CD4-positive, alpha-beta T cell (primary cell): ENCODE measurements at regions of chr11 and their contacts with region 1.

Region 1: GRCh38 chr11:75241036-75241905 is 697 bp downstream of the TPBGL start:
- DNase-seq: peak; percentile 64 to 93 (median 85)
- ATAC-seq: peak; percentile 88
- H3K4me3 ChIP-seq: peak overlapping the region; percentile 30
- H3K4me3 Mint-ChIP-seq: peak overlapping the region; percentile 82
- H3K27ac ChIP-seq: no peak overlapping the region
- H3K27ac Mint-ChIP-seq: no peak overlapping the region
- H3K4me1 ChIP-seq: peaks cover 15% of the 10 kb centered on the region
- H3K4me1 Mint-ChIP-seq: peaks cover 5% of the 10 kb centered on the region
- H3K27me3 ChIP-seq: peaks cover 33% of the 10 kb centered on the region in 2 experiments
- H3K27me3 Mint-ChIP-seq: peaks cover 63% of the 10 kb centered on the region
- CTCF ChIP-seq: peak; percentile 40

Region 2: DNA sequence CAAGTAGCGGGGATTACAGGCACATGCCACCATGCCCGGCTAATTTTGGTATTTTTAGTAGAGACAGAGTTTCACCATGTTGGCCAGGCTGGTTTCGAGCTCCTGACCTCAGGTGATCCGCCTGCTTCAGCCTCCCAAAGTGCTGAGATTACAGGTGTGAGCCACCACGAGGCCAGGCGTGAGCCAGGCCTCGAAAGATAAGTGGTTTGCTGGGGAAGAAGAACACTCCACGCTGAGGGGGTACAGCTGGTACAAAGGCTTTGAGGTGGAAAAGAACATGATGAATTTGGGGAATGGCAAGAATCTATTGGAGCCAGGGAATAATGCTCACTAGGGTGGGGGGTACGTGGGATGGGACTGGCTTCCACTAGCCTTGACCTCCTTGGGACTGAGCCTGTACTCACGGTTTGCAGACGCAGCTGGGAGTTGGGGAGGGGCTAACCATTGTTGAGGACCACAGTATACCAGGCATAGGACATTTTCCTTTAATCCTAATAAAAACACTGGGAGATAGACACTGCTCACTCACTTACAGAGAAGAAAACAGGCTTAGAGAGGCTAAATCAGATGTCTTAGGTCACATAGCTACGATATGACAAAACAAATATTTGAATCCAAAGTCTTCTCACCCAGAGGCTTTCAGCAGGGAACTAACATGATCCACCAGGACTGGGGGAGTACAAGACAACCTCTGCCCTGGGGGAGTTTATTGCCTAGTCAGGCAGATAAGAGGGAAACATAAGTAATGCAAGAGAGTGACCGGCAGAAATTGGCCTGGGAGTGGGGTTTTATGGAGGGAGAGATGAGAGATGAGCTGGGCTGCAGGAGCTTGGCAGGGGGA is 85.5 kb before region 1 on chr11:
- CTCF ChIA-PET with region 1: no interaction called
- POLR2A ChIA-PET with region 1: no interaction called
- intact Hi-C with region 1: no loop called
- DNase-seq: no peak
- ATAC-seq: no peak
- H3K4me3 ChIP-seq: no peak overlapping the region
- H3K4me3 Mint-ChIP-seq: no peak overlapping the region
- H3K27ac ChIP-seq: no peak overlapping the region
- H3K27ac Mint-ChIP-seq: no peak overlapping the region
- H3K4me1 ChIP-seq: no peaks in the 10 kb centered on the region
- H3K4me1 Mint-ChIP-seq: no peaks in the 10 kb centered on the region
- H3K27me3 ChIP-seq: peaks cover 0 to under 1% of the 10 kb centered on the region in 2 experiments
- H3K27me3 Mint-ChIP-seq: peaks cover 8% of the 10 kb centered on the region
- CTCF ChIP-seq: no peak

Region 3: DNA sequence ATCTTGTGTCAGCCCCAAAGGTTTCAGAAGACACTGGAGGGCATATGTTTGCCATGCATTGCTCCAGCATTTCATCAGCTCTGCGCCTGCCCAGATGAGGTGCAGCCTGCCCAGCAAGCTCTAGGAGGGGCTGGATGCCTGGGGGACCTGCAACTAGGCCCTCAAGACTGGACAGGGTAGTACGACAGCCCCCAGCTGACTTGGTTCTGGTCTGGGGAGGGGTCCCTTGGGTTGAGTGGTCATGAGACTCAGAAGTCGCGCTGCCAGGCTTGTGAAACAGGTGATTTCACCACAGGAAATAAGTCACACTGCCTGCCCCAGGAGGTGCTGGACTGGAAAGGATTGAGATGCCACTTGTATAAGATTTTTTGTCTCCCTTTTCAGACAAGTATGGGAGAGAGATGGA is 22.7 kb after region 1 on chr11:
- CTCF ChIA-PET with region 1: interaction called, 3 read pairs
- POLR2A ChIA-PET with region 1: interaction called, 11 read pairs
- intact Hi-C with region 1: no loop called
- DNase-seq: peak in 4 of 14 experiments; percentile 29 to 46 (median 41)
- ATAC-seq: peak; percentile 21
- H3K4me3 ChIP-seq: no peak overlapping the region
- H3K4me3 Mint-ChIP-seq: no peak overlapping the region
- H3K27ac ChIP-seq: peak overlapping the region in 1 of 2 donors; percentile 22
- H3K27ac Mint-ChIP-seq: peak overlapping the region; percentile 67
- H3K4me1 ChIP-seq: peaks cover 56% of the 10 kb centered on the region
- H3K4me1 Mint-ChIP-seq: peaks cover 48% of the 10 kb centered on the region
- H3K27me3 ChIP-seq: no peaks in the 10 kb centered on the region
- H3K27me3 Mint-ChIP-seq: no peaks in the 10 kb centered on the region
- CTCF ChIP-seq: no peak

Region 4: GRCh38 chr11:75413864-75414263 is 172.6 kb after region 1 on chr11:
- CTCF ChIA-PET with region 1: no interaction called
- POLR2A ChIA-PET with region 1: no interaction called
- intact Hi-C with region 1: no loop called
- DNase-seq: no peak
- ATAC-seq: no peak
- H3K4me3 ChIP-seq: no peak overlapping the region
- H3K4me3 Mint-ChIP-seq: no peak overlapping the region
- H3K27ac ChIP-seq: no peak overlapping the region
- H3K27ac Mint-ChIP-seq: no peak overlapping the region
- H3K4me1 ChIP-seq: no peaks in the 10 kb centered on the region
- H3K4me1 Mint-ChIP-seq: peaks cover 4% of the 10 kb centered on the region
- H3K27me3 ChIP-seq: no peaks in the 10 kb centered on the region
- H3K27me3 Mint-ChIP-seq: no peaks in the 10 kb centered on the region
- CTCF ChIP-seq: no peak